IMR-90 (cell line): ENCODE measurements at regions of chr9 and their contacts with region 1.

Region 1: DNA sequence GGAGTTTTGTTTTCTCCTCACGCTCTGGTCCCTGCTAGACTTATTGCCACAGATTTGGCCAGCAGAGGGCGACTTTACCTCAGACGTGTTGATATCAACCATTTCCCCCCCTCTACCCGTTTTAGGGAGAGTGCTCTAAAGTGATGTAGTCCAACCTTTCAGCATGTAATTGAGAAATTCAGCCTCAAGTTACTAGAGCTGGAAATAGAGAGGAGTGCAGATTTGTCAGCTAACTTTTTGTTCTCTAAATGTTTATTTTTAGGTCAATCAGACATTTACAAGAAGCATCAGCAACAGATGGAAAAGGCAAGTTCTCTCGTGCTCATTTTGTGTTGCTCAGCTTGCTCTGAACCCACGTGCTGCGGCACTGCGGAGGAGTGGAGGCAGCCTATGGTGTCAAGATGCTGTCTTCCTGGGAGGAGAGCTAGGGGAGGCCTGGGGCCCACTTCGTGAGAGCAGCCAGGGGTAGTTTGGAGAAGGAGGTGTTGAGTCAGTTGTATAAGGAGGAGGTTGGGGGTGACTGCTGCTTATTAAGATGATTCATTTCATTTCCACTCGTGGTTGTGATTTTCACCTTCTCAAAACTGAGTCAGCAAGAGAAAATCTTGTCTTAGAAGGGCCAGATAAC is 53.6 kb downstream of the GPR107 start:
- DNase-seq: peak; percentile 87
- ATAC-seq: peak; percentile 90
- H3K4me3 ChIP-seq: no peak overlapping the region
- H3K27ac ChIP-seq: 0 out of 2 replicates have a peak overlapping the region, but pooled peaks have one; percentile 6
- H3K4me1 ChIP-seq: peaks cover 15% of the 10 kb centered on the region
- H3K27me3 ChIP-seq: no peaks in the 10 kb centered on the region
- CTCF ChIP-seq: peak; percentile 91
- POLR2A ChIP-seq: no peak
- RAD21 ChIP-seq: peak; percentile 91

Region 2: GRCh38 chr9:130172161-130172857 is 65.0 kb after region 1 on chr9 and contains the start of gene NCS1:
- CTCF ChIA-PET with region 1: interaction called, 3 read pairs
- POLR2A ChIA-PET with region 1: no interaction called
- dilution Hi-C with region 1: no loop called
- in situ Hi-C with region 1: no loop called
- intact Hi-C with region 1: loop called (anchors 1 kb)
- DNase-seq: peak; percentile 61
- ATAC-seq: peak; percentile 89
- H3K4me3 ChIP-seq: peak within 1 kb of the TSS; percentile 71
- H3K27ac ChIP-seq: peak within 1 kb of the TSS; percentile 70
- H3K4me1 ChIP-seq: peaks cover 10% of the 10 kb centered on the region
- H3K27me3 ChIP-seq: no peaks in the 10 kb centered on the region
- CTCF ChIP-seq: no peak
- POLR2A ChIP-seq: no peak
- RAD21 ChIP-seq: no peak
- total RNA-seq, gene NCS1: 35.8 and 41.0 TPM in 2 replicates

Region 3: GRCh38 chr9:130243015-130243734 is 135.8 kb after region 1 on chr9:
- CTCF ChIA-PET with region 1: interaction called, 3 read pairs
- POLR2A ChIA-PET with region 1: no interaction called
- dilution Hi-C with region 1: loop called (anchors 25 kb)
- in situ Hi-C with region 1: loop called (anchors 25 kb)
- intact Hi-C with region 1: no loop called
- DNase-seq: peak; percentile 25
- ATAC-seq: peak; percentile 86
- H3K4me3 ChIP-seq: no peak overlapping the region
- H3K27ac ChIP-seq: no peak overlapping the region
- H3K4me1 ChIP-seq: peaks cover 3% of the 10 kb centered on the region; the same call in 1 of the 2 replicates
- H3K27me3 ChIP-seq: no peaks in the 10 kb centered on the region
- CTCF ChIP-seq: peak; percentile 81
- POLR2A ChIP-seq: no peak
- RAD21 ChIP-seq: peak; percentile 68

Region 4: GRCh38 chr9:130343445-130343918 is 236.1 kb after region 1 on chr9:
- CTCF ChIA-PET with region 1: no interaction called
- POLR2A ChIA-PET with region 1: no interaction called
- dilution Hi-C with region 1: no loop called
- in situ Hi-C with region 1: loop called (anchors 5 kb)
- intact Hi-C with region 1: loop called (anchors 1 kb)
- DNase-seq: no peak
- ATAC-seq: peak; percentile 68
- H3K4me3 ChIP-seq: no peak overlapping the region
- H3K27ac ChIP-seq: no peak overlapping the region
- H3K4me1 ChIP-seq: no peaks in the 10 kb centered on the region
- H3K27me3 ChIP-seq: peaks cover 21% of the 10 kb centered on the region; the same call in 1 of the 2 replicates
- CTCF ChIP-seq: peak; percentile 73
- POLR2A ChIP-seq: no peak
- RAD21 ChIP-seq: peak; percentile 82

Region 5: GRCh38 chr9:130663258-130663976 is 556.1 kb after region 1 on chr9:
- CTCF ChIA-PET with region 1: no interaction called
- POLR2A ChIA-PET with region 1: no interaction called
- dilution Hi-C with region 1: no loop called
- in situ Hi-C with region 1: loop called (anchors 25 kb)
- intact Hi-C with region 1: no loop called
- DNase-seq: no peak
- ATAC-seq: peak; percentile 53
- H3K4me3 ChIP-seq: no peak overlapping the region
- H3K27ac ChIP-seq: no peak overlapping the region
- H3K4me1 ChIP-seq: no peaks in the 10 kb centered on the region; the same call in 1 of the 2 replicates
- H3K27me3 ChIP-seq: peaks cover 98% of the 10 kb centered on the region
- CTCF ChIP-seq: no peak
- POLR2A ChIP-seq: no peak
- RAD21 ChIP-seq: no peak